ENCODE measurements at regions of chr4 and their contacts with region 1.

Region 1: GRCh38 chr4:174217273-174218126 is 66.0 kb downstream of the FBXO8 start:
- DNase-seq: no peak
- H3K4me3 ChIP-seq: peak overlapping the region in 32 of 59 donors; percentile 2 to 60 (median 29)
- H3K27ac ChIP-seq: no peak overlapping the region
- H3K27me3 ChIP-seq: peaks cover 36 to 86% (median 65%) of the 10 kb centered on the region in 45 donors
- CTCF ChIP-seq: no peak

Region 2: GRCh38 chr4:173522123-173522950 is 695.2 kb before region 1 on chr4:
- intact Hi-C with region 1: loop called in 1 of 2 experiments (anchors 10 kb)
- DNase-seq: no peak
- H3K4me3 ChIP-seq: peak overlapping the region in 57 of 59 donors; percentile 3 to 67 (median 37)
- H3K27ac ChIP-seq: no peak overlapping the region
- H3K27me3 ChIP-seq: peaks cover 36 to 100% (median 100%) of the 10 kb centered on the region in 45 donors
- CTCF ChIP-seq: no peak

Region 3: GRCh38 chr4:174307694-174308093 is 90.2 kb after region 1 on chr4:
- intact Hi-C with region 1: no loop called
- DNase-seq: no peak
- H3K4me3 ChIP-seq: no peak overlapping the region
- H3K27ac ChIP-seq: no peak overlapping the region
- H3K27me3 ChIP-seq: no peaks in the 10 kb centered on the region
- CTCF ChIP-seq: no peak

Region 4: GRCh38 chr4:174490451-174490870 is 273.0 kb after region 1 on chr4:
- intact Hi-C with region 1: no loop called
- DNase-seq: no peak
- H3K4me3 ChIP-seq: no peak overlapping the region
- H3K27ac ChIP-seq: no peak overlapping the region
- H3K27me3 ChIP-seq: no peaks in the 10 kb centered on the region
- CTCF ChIP-seq: no peak